ENCODE measurements at regions of chr6 and their contacts with region 1.

Region 1: GRCh38 chr6:87472525-87473418 is at the start of gene SLC35A1:
- DNase-seq: peak; percentile 88
- H3K4me3 Mint-ChIP-seq: peak within 1 kb of the TSS; percentile 98
- H3K27ac Mint-ChIP-seq: peak within 1 kb of the TSS; percentile 91
- H3K4me1 Mint-ChIP-seq: peaks cover 19% of the 10 kb centered on the region
- H3K27me3 Mint-ChIP-seq: peaks cover 3% of the 10 kb centered on the region
- total RNA-seq, gene SLC35A1: 7.8 to 9.5 TPM

Region 2: GRCh38 chr6:87054143-87054833 is 418.5 kb before region 1 on chr6:
- CTCF ChIA-PET with region 1: no interaction called
- POLR2A ChIA-PET with region 1: no interaction called
- intact Hi-C with region 1: no loop called
- DNase-seq: no peak
- H3K4me3 Mint-ChIP-seq: no peak overlapping the region
- H3K27ac Mint-ChIP-seq: no peak overlapping the region
- H3K4me1 Mint-ChIP-seq: no peaks in the 10 kb centered on the region
- H3K27me3 Mint-ChIP-seq: peaks cover 11% of the 10 kb centered on the region

Region 3: GRCh38 chr6:87393022-87393622 is 79.7 kb before region 1 on chr6:
- CTCF ChIA-PET with region 1: interaction called, 3 read pairs
- POLR2A ChIA-PET with region 1: no interaction called
- intact Hi-C with region 1: loop called (anchors 5 kb)
- DNase-seq: peak; percentile 49
- H3K4me3 Mint-ChIP-seq: no peak overlapping the region
- H3K27ac Mint-ChIP-seq: no peak overlapping the region
- H3K4me1 Mint-ChIP-seq: no peaks in the 10 kb centered on the region
- H3K27me3 Mint-ChIP-seq: no peaks in the 10 kb centered on the region

Region 4: DNA sequence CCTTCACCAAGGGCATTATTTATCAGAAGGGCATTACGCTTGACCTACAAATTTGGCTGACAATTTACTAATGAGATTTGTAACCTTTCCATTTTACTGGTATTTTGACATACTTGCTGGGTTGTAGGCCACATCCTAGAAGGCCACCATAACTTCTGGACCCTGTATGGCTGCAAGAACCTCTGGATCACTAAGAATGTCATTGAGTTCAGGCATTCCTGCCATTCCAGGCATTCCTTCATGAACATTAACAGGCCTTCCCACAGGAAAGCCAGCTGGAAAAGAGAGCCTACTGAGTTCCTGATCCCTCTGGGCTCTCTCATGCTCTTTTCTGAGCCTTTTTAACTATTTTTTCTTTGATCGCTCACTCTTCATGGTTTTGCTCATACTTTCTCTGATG is 28.4 kb before region 1 on chr6:
- CTCF ChIA-PET with region 1: no interaction called
- POLR2A ChIA-PET with region 1: no interaction called
- intact Hi-C with region 1: no loop called
- DNase-seq: no peak
- H3K4me3 Mint-ChIP-seq: no peak overlapping the region
- H3K27ac Mint-ChIP-seq: no peak overlapping the region
- H3K4me1 Mint-ChIP-seq: no peaks in the 10 kb centered on the region
- H3K27me3 Mint-ChIP-seq: peaks cover 16% of the 10 kb centered on the region

Region 5: DNA sequence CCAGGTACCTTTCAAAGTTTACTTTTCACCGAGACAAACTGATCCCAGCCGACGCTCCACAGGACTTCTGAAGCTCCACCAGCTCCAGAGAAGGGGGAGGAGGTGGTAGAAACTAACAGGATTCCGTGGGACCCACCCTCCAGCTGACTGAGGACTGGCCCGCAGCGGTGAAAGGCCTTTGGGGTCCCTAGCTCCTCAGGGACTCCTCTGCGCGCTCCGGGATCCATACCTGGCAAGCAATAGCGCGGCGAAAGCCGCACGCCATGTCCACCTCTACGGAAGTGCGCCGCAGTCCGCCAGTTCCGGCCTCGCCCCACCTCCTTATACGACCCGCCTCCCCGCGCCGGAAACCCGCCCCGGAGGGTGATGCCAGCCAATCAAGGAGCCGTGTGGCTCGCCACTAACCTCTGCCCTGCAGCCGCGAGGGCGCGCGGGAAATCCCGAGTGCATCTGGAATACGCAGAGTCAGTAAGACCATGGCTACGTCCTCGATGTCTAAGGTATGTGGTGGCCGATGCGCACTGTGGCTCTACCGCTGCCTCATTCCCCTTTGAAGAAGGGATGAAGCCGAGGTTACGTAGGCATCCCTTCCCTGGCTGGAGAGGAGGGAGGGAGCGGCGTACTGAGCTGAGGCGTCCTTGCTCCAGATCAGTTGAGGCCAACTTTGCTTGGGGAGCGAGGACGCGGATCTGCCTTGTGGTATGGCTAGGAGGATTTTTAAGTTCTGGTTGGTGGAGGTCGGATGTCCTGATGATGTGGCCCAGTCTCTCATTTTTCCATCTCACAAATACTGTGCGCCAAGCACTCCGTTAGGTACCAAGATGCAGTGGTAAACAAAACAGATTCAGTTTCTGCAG is 117.1 kb after region 1 on chr6 and contains the starts of genes ORC3 and RARS2:
- CTCF ChIA-PET with region 1: no interaction called
- POLR2A ChIA-PET with region 1: no interaction called
- intact Hi-C with region 1: loop called (anchors 1 kb)
- DNase-seq: peak; percentile 98
- H3K4me3 Mint-ChIP-seq: peak within 1 kb of the TSS; percentile 85
- H3K27ac Mint-ChIP-seq: peak within 1 kb of the TSS; percentile 79
- H3K4me1 Mint-ChIP-seq: peaks cover 49% of the 10 kb centered on the region
- H3K27me3 Mint-ChIP-seq: no peaks in the 10 kb centered on the region
- total RNA-seq, gene ORC3: 35.0 to 38.7 TPM
- total RNA-seq, gene RARS2: 20.0 to 20.8 TPM

Region 6: DNA sequence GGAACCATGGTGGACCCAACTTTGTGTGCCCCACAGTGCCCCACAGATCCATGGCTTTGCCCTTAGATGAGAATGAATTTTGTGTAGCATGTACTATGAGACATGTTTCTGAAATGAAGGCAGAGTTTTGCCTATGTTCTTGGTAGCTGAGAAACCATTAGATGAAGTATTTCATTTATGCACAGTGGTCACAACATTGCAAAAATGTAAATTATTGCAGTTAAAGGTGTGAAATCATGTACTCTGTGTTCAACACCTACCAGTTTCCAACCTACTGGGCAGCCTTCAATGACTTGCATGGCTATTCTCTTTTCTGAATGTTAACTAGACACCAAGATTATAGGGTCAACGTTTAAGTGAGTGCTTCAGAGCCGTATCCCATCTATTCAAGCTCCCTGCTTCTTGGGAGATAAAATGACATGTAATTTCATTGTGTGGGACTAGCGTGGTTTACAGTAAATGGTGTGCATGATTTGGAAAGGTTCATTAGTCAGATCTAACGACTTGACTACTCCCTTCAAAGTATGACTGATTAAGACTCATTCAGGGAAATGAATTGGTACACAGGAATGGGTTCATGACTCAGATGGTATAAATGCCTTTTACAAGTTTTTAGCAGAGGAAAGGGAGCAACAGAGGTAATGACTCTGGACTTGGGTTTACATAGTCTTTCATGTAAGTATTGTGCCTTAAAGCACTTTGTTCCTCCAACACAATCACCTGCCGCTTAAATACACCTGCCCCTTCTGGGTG is 335.4 kb after region 1 on chr6:
- CTCF ChIA-PET with region 1: no interaction called
- POLR2A ChIA-PET with region 1: no interaction called
- intact Hi-C with region 1: loop called (anchors 10 kb)
- DNase-seq: peak; percentile 17
- H3K4me3 Mint-ChIP-seq: no peak overlapping the region
- H3K27ac Mint-ChIP-seq: peak overlapping the region; percentile 89
- H3K4me1 Mint-ChIP-seq: peaks cover 34% of the 10 kb centered on the region
- H3K27me3 Mint-ChIP-seq: peaks cover 17% of the 10 kb centered on the region